Activated T-helper 2 cell treated with anti-CD3 and anti-CD28 coated beads, Interferon-gamma antibody, Interleukin-2, Interleukin-4, amounts not matched to agents 10 μg/mL and 5 μg/mL and 100 μg/mL, durations not matched to agents 14 hours and 24 hours and 36 hours (primary cell): ENCODE measurements at regions of chr7 and their contacts with region 1.

Region 1: DNA sequence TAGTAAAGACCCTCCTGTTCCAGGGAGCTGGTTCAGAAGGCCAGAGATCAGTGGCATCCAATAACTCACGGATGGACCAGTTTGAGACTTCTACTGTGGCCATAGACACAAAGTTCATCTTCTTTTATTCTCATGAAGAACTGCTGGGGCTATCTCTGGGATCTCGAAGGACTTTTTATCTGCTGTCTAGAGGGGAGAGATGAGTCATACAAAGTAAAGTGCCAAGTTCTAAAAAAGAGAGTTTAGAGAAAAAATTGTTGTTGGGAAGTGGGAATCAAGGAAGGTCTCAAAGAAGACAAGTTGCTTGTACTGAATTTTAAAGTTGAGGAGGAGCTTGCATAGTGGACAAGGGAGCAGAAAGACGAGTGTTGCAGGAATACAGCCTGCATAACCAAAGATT is 8.0 kb upstream of the FAM221A start:
- DNase-seq: no peak
- H3K4me3 Mint-ChIP-seq: no peak overlapping the region
- H3K27ac Mint-ChIP-seq: no peak overlapping the region
- H3K4me1 Mint-ChIP-seq: peaks cover 2% of the 10 kb centered on the region
- H3K27me3 Mint-ChIP-seq: peaks cover 30% of the 10 kb centered on the region

Region 2: DNA sequence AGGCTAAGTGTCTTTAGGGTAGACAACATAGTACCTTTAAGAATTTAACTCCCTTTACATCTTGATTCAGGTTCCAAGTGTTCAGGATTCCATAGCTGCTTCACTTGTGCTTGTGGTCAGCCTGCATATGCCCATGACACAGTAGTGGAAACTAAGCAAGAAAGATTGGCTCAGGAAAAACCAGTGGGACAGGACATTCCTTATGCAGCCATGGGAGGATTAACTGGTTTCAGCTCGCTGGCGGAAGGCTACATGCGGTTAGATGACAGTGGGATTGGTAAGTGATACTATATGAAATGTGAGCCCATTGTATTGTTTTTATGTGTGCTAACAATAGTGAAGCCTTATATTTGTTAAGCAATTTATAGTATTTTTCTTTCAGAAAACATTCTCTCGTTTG is 19.3 kb after region 1 on chr7:
- intact Hi-C with region 1: loop called (anchors 1 kb)
- DNase-seq: no peak
- H3K4me3 Mint-ChIP-seq: no peak overlapping the region
- H3K27ac Mint-ChIP-seq: no peak overlapping the region
- H3K4me1 Mint-ChIP-seq: no peaks in the 10 kb centered on the region
- H3K27me3 Mint-ChIP-seq: no peaks in the 10 kb centered on the region